Activated CD4-positive, alpha-beta T cell treated with anti-CD3 and anti-CD28 coated beads, Interleukin-2, amount 10 ng/mL, durations not matched to agents 24 days and 14 days (primary cell): ENCODE measurements at regions of chr3 and their contacts with region 1.

Region 1: GRCh38 chr3:192851821-192852424 is 65.7 kb downstream of the MB21D2 start:
- DNase-seq: no peak
- H3K4me3 Mint-ChIP-seq: no peak overlapping the region
- H3K27ac Mint-ChIP-seq: peak overlapping the region; percentile 27
- H3K4me1 Mint-ChIP-seq: peaks cover 45% of the 10 kb centered on the region
- H3K27me3 Mint-ChIP-seq: no peaks in the 10 kb centered on the region

Region 2: DNA sequence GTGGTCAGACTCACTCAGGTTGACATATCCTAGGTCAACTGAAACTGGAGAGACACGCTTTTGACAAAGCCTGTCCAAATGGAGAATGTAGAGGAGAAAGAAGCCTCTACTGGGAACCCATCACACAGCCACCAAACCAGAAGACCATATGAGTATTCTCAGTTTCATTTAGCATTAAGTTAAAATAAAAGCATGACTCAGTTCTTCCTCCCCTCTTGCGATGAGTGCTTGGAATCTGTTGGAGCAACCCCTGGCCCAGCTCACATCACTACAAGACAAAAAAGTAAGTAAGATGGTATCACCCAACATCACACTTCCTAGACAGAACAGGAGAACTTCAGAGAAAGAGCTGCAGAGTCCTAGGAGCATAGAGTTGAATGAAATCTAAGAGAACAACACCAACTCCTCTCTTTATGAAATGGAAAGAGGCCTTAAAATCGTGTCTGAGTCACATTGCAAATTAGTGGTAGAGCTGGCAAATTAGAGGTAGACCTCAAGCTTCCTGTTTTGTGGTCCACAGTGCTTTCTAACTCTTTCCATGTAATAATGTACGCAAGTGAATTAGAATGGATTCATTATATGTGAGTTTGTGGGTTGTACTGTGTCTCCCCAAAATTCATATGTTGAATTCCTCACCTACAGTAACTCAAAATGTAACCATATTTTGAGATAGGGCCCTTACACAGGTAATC is 175.8 kb before region 1 on chr3:
- intact Hi-C with region 1: loop called (anchors 1 kb)
- DNase-seq: peak; percentile 57
- H3K4me3 Mint-ChIP-seq: peak overlapping the region; percentile 36
- H3K27ac Mint-ChIP-seq: peak overlapping the region; percentile 94
- H3K4me1 Mint-ChIP-seq: peaks cover 7% of the 10 kb centered on the region
- H3K27me3 Mint-ChIP-seq: peaks cover 14% of the 10 kb centered on the region

Region 3: GRCh38 chr3:192831111-192831644 is 20.7 kb before region 1 on chr3:
- intact Hi-C with region 1: loop called (anchors 1 kb)
- DNase-seq: peak; percentile 66
- H3K4me3 Mint-ChIP-seq: peak overlapping the region; percentile 26
- H3K27ac Mint-ChIP-seq: peak overlapping the region; percentile 83
- H3K4me1 Mint-ChIP-seq: peaks cover 39% of the 10 kb centered on the region
- H3K27me3 Mint-ChIP-seq: no peaks in the 10 kb centered on the region

Region 4: GRCh38 chr3:192887047-192887446 is 35.1 kb after region 1 on chr3:
- intact Hi-C with region 1: loop called (anchors 1 kb)
- DNase-seq: peak; percentile 64
- H3K4me3 Mint-ChIP-seq: peak overlapping the region; percentile 39
- H3K27ac Mint-ChIP-seq: peak overlapping the region; percentile 85
- H3K4me1 Mint-ChIP-seq: peaks cover 57% of the 10 kb centered on the region
- H3K27me3 Mint-ChIP-seq: peaks cover 3% of the 10 kb centered on the region

Region 5: DNA sequence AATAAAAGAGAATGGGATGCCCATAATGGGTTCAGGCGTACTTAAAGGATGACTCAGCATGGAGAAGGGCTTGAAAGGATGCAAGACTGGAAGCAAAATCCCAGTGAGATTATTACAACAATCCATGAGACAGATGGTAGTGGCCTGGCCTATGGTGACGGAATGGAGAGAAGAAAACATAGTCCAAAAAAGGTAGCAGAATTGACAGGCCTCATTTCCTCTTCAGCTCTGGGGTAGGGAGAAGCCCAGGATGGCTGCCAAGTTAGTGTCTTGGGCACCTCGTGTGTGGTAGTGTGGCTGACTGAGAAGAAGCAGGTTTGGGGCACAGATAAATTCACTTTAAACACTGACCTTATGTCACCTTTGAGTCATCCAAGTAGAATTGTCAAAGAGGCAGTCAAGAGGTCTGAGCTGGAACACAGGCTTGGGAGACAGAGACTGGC is 47.6 kb after region 1 on chr3:
- intact Hi-C with region 1: loop called (anchors 1 kb)
- DNase-seq: no peak
- H3K4me3 Mint-ChIP-seq: peak overlapping the region; percentile 65
- H3K27ac Mint-ChIP-seq: peak overlapping the region; percentile 85
- H3K4me1 Mint-ChIP-seq: peaks cover 62% of the 10 kb centered on the region
- H3K27me3 Mint-ChIP-seq: peaks cover 20% of the 10 kb centered on the region

Region 6: GRCh38 chr3:192957441-192958021 is 105.6 kb after region 1 on chr3:
- intact Hi-C with region 1: loop called (anchors 5 kb)
- DNase-seq: peak; percentile 67
- H3K4me3 Mint-ChIP-seq: peak overlapping the region; percentile 24
- H3K27ac Mint-ChIP-seq: peak overlapping the region; percentile 78
- H3K4me1 Mint-ChIP-seq: peaks cover 24% of the 10 kb centered on the region
- H3K27me3 Mint-ChIP-seq: no peaks in the 10 kb centered on the region

Region 7: GRCh38 chr3:193214445-193214844 is 362.5 kb after region 1 on chr3:
- intact Hi-C with region 1: no loop called
- DNase-seq: no peak
- H3K4me3 Mint-ChIP-seq: no peak overlapping the region
- H3K27ac Mint-ChIP-seq: no peak overlapping the region
- H3K4me1 Mint-ChIP-seq: no peaks in the 10 kb centered on the region
- H3K27me3 Mint-ChIP-seq: peaks cover 6% of the 10 kb centered on the region